Psoas muscle (tissue), 8 donors: ENCODE measurements at regions of chr4 and their contacts with region 1.

Region 1: GRCh38 chr4:139177868-139178611 is 1.0 kb upstream of the ELF2 start:
- DNase-seq: peak; percentile 96 to 98
- ATAC-seq: peak; percentile 80 to 88 (median 82)
- H3K4me3 ChIP-seq: peak overlapping the region; percentile 99
- H3K27ac ChIP-seq: peak overlapping the region; percentile 100
- H3K4me1 ChIP-seq: peaks cover 18% of the 10 kb centered on the region
- H3K27me3 ChIP-seq: no peaks in the 10 kb centered on the region
- CTCF ChIP-seq: no peak

Region 2: GRCh38 chr4:139083956-139084803 is 93.9 kb before region 1 on chr4:
- intact Hi-C with region 1: loop called in 1 of 2 experiments (anchors 1 kb)
- DNase-seq: peak; percentile 88 to 96
- ATAC-seq: peak; percentile 73 to 80 (median 79)
- H3K4me3 ChIP-seq: peak overlapping the region; percentile 83
- H3K27ac ChIP-seq: peak overlapping the region; percentile 98
- H3K4me1 ChIP-seq: peaks cover 43% of the 10 kb centered on the region
- H3K27me3 ChIP-seq: no peaks in the 10 kb centered on the region
- CTCF ChIP-seq: peak; percentile 43

Region 3: GRCh38 chr4:139099366-139099982 is 78.6 kb before region 1 on chr4:
- intact Hi-C with region 1: loop called in 1 of 2 experiments (anchors 5 kb)
- DNase-seq: peak; percentile 55 to 68
- ATAC-seq: peak; percentile 79 to 90 (median 86)
- H3K4me3 ChIP-seq: no peak overlapping the region
- H3K27ac ChIP-seq: no peak overlapping the region
- H3K4me1 ChIP-seq: no peaks in the 10 kb centered on the region
- H3K27me3 ChIP-seq: no peaks in the 10 kb centered on the region
- CTCF ChIP-seq: peak; percentile 90

Region 4: DNA sequence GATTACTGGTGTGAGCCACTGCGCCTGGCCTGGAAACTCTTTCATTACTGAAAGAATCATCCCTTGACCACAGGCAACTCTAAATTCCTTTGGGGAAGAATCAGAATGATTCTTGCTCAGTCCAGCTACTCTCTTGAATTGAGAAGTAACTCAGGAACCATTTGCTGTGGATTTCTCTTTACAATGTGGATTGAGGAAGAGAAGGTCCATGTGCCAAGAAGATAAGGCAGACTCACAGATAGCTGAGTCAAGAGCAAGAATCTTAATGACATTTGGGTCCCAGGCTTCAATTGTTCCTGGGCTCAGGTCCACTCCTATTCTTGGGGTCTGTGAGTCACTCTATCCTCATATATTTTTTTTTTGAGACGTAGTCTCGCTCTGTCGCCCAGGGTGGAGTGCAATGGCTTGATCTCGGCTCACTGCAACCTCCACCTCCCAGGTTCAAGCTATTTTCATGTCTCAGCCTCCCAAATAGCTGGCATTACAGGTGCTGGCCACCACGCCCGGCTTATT is 108.2 kb after region 1 on chr4:
- intact Hi-C with region 1: no loop called
- DNase-seq: no peak
- ATAC-seq: peak in 3 of 4 donors; percentile 50 to 70 (median 59)
- H3K4me3 ChIP-seq: no peak overlapping the region
- H3K27ac ChIP-seq: no peak overlapping the region
- H3K4me1 ChIP-seq: no peaks in the 10 kb centered on the region
- H3K27me3 ChIP-seq: no peaks in the 10 kb centered on the region
- CTCF ChIP-seq: no peak